CD4-positive, alpha-beta memory T cell (primary cell): ENCODE measurements at regions of chr12 and their contacts with region 1.

Region 1: DNA sequence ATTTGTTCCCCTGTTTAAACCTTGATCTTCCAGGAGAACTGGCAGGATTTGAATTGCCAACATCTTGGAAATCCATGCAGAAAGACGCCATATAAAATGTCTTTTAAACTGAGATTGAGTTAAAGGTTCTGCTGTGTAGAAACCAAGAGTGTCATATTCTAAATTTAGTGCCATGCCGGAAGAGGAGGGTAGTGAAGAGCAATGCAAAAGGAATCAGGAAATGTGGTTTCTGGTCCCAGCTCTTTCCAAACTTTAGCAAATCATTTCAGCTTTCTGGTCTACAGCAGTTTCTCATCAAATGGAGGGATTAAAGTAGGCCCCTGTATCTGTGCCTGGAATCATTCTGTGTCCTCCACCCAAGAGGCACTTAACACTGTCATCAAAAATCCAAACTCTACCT is 85.7 kb downstream of the BTG1 start:
- DNase-seq: no peak
- H3K4me3 ChIP-seq: no peak overlapping the region
- H3K4me3 Mint-ChIP-seq: peak overlapping the region in 1 of 8 donors; percentile 75
- H3K27ac ChIP-seq: no peak overlapping the region
- H3K27ac Mint-ChIP-seq: peak overlapping the region in 4 of 7 donors; percentile 10 to 93 (median 30)
- H3K4me1 ChIP-seq: peaks cover 53% of the 10 kb centered on the region
- H3K4me1 Mint-ChIP-seq: peaks cover 44 to 88% (median 68%) of the 10 kb centered on the region in 4 donors
- H3K27me3 ChIP-seq: no peaks in the 10 kb centered on the region
- H3K27me3 Mint-ChIP-seq: no peaks in the 10 kb centered on the region

Region 2: DNA sequence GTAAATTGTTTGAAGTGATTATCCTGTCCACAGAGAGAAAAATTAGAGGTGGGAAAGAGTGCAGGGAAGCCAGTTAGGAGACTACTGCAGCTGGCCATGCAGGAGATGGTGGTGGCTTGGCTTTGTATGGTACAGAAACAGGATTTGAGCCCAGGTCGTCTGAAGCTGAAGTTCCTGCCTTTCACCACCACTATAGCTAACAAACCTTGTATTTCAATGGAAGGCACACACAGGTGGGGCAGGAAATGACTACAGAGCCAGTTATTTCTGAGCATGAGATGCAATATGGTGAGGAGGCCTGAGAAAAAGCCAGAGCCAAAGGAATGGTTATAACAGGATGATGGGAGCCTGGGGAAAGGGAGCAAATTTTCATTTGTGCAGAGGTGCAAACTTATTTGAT is 18.2 kb before region 1 on chr12:
- CTCF ChIA-PET with region 1: interaction called, 26 read pairs
- POLR2A ChIA-PET with region 1: interaction called, 19 read pairs
- intact Hi-C with region 1: no loop called
- DNase-seq: peak; percentile 42 to 58 (median 48)
- H3K4me3 ChIP-seq: no peak overlapping the region
- H3K4me3 Mint-ChIP-seq: peak overlapping the region in 7 of 8 donors; percentile 14 to 84 (median 64)
- H3K27ac ChIP-seq: no peak overlapping the region
- H3K27ac Mint-ChIP-seq: peak overlapping the region; percentile 54 to 90 (median 82)
- H3K4me1 ChIP-seq: peaks cover 69% of the 10 kb centered on the region
- H3K4me1 Mint-ChIP-seq: peaks cover 46 to 87% (median 63%) of the 10 kb centered on the region in 4 donors
- H3K27me3 ChIP-seq: no peaks in the 10 kb centered on the region
- H3K27me3 Mint-ChIP-seq: no peaks in the 10 kb centered on the region